A673 (cell line): ENCODE measurements at regions of chr4 and their contacts with region 1.

Region 1: GRCh38 chr4:140186651-140187315 is 32.8 kb upstream of the MAML3 start:
- DNase-seq: no peak
- H3K4me3 ChIP-seq: no peak overlapping the region
- H3K27ac ChIP-seq: no peak overlapping the region
- H3K4me1 ChIP-seq: peaks cover 18% of the 10 kb centered on the region
- H3K27me3 ChIP-seq: no peaks in the 10 kb centered on the region
- CTCF ChIP-seq: no peak

Region 2: DNA sequence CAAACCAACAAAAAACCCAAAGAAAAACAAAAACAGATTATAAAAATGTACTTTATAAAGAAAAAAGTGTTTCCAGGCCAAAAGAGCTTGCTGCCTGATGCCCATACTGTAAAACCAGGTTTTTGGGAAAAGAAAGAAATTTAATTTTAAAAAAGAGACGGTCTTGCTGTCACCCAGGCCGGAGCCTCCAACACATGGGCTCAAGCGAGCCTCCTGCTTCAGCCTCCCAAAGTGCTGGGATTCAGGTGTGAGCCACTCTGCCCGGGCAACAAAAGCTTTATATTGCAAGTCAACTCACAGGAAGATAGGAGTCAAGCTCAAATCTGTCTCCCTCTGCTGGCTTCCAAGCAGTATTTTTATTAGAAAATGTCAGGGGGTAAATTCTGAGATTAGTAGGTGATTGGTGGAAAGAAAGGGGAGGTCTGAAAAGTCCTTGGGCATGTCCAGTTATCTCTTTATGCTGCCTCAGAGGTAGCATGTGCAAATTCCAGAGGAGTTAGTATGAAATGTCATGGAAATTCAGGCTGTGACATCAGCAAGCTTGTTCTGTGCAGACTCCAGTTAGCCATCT is 481.8 kb before region 1 on chr4:
- CTCF ChIA-PET with region 1: no interaction called
- POLR2A ChIA-PET with region 1: no interaction called
- intact Hi-C with region 1: no loop called
- DNase-seq: peak; percentile 23
- H3K4me3 ChIP-seq: no peak overlapping the region
- H3K27ac ChIP-seq: no peak overlapping the region
- H3K4me1 ChIP-seq: no peaks in the 10 kb centered on the region
- H3K27me3 ChIP-seq: no peaks in the 10 kb centered on the region
- CTCF ChIP-seq: peak; percentile 47

Region 3: GRCh38 chr4:139791681-139792080 is 395.1 kb before region 1 on chr4:
- CTCF ChIA-PET with region 1: no interaction called
- POLR2A ChIA-PET with region 1: interaction called, 14 read pairs
- intact Hi-C with region 1: no loop called
- DNase-seq: no peak
- H3K4me3 ChIP-seq: no peak overlapping the region
- H3K27ac ChIP-seq: no peak overlapping the region
- H3K4me1 ChIP-seq: peaks cover 16% of the 10 kb centered on the region
- H3K27me3 ChIP-seq: no peaks in the 10 kb centered on the region
- CTCF ChIP-seq: no peak

Region 4: DNA sequence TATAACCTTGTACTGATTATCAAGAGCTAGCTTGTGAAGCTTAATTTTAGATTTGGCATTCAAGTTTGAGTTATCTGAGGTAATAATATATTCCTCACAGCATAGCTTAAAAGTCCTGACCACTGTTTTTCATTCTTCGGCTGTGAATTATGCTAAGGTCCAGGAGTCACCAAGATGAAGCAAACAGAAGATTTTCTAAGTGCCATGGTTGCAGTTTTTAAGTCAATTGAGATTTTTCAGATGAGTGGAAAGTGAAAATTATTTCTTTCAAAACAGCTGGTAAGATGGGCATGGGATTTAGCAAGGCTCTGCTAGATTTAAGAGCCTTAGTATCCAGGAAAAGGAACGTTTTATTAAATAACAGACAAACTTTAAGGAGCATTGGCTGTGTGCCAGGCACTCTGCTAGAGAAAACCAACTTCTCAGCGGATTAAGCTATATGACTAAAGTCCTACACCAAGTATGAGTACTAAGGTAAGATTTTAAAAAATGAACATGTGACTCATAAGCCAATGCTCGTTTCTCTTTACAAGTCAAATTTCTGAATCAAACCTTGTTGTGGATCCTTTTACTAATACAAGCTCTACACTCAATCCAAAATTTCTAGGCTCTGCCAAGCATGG is 1299.7 kb after region 1 on chr4:
- CTCF ChIA-PET with region 1: no interaction called
- POLR2A ChIA-PET with region 1: interaction called, 10 read pairs
- intact Hi-C with region 1: no loop called
- DNase-seq: peak; percentile 18
- H3K4me3 ChIP-seq: no peak overlapping the region
- H3K27ac ChIP-seq: no peak overlapping the region
- H3K4me1 ChIP-seq: no peaks in the 10 kb centered on the region
- H3K27me3 ChIP-seq: no peaks in the 10 kb centered on the region
- CTCF ChIP-seq: no peak